ENCODE measurements at regions of chr11 and their contacts with region 1.

Region 1: GRCh38 chr11:90822996-90823395 is 600.1 kb upstream of the CHORDC1 start:
- DNase-seq: no peak
- H3K4me3 ChIP-seq: no peak overlapping the region
- H3K4me3 Mint-ChIP-seq: peak overlapping the region; percentile 9
- H3K27ac Mint-ChIP-seq: peak overlapping the region; percentile 3
- H3K4me1 ChIP-seq: peaks cover 17% of the 10 kb centered on the region
- H3K4me1 Mint-ChIP-seq: peaks cover 19% of the 10 kb centered on the region
- H3K27me3 ChIP-seq: no peaks in the 10 kb centered on the region
- H3K27me3 Mint-ChIP-seq: no peaks in the 10 kb centered on the region
- CTCF ChIP-seq: no peak

Region 2: GRCh38 chr11:90805167-90805566 is 17.8 kb before region 1 on chr11:
- CTCF ChIA-PET with region 1: no interaction called
- POLR2A ChIA-PET with region 1: no interaction called
- intact Hi-C with region 1: loop called (anchors 2 kb)
- DNase-seq: no peak
- H3K4me3 ChIP-seq: no peak overlapping the region
- H3K4me3 Mint-ChIP-seq: no peak overlapping the region
- H3K27ac Mint-ChIP-seq: peak overlapping the region; percentile 55
- H3K4me1 ChIP-seq: peaks cover 21% of the 10 kb centered on the region
- H3K4me1 Mint-ChIP-seq: peaks cover 25% of the 10 kb centered on the region
- H3K27me3 ChIP-seq: no peaks in the 10 kb centered on the region
- H3K27me3 Mint-ChIP-seq: no peaks in the 10 kb centered on the region
- CTCF ChIP-seq: no peak

Region 3: DNA sequence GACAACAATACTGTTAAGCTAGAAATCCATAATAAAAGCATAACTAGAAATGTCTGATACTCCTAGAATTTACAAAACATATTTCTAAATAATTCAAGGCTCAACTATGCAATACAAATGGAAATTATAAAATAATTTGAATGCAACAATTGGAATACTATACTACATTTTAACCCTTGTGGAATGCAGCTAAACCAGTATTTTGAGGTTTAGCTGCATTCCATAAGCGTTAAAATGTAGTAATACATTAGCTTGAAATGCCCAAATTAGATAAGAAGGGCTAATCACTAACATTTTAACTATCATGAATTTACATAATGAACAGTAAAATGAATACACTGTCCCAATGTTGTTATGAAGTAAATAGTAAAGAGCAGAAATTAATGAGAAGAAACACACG is 17.1 kb after region 1 on chr11:
- CTCF ChIA-PET with region 1: no interaction called
- POLR2A ChIA-PET with region 1: no interaction called
- intact Hi-C with region 1: loop called (anchors 1 kb)
- DNase-seq: peak in 1 of 2 experiments; percentile 17
- H3K4me3 ChIP-seq: no peak overlapping the region
- H3K4me3 Mint-ChIP-seq: no peak overlapping the region
- H3K27ac Mint-ChIP-seq: no peak overlapping the region
- H3K4me1 ChIP-seq: peaks cover 28% of the 10 kb centered on the region
- H3K4me1 Mint-ChIP-seq: peaks cover 19% of the 10 kb centered on the region
- H3K27me3 ChIP-seq: no peaks in the 10 kb centered on the region
- H3K27me3 Mint-ChIP-seq: no peaks in the 10 kb centered on the region
- CTCF ChIP-seq: no peak

Region 4: DNA sequence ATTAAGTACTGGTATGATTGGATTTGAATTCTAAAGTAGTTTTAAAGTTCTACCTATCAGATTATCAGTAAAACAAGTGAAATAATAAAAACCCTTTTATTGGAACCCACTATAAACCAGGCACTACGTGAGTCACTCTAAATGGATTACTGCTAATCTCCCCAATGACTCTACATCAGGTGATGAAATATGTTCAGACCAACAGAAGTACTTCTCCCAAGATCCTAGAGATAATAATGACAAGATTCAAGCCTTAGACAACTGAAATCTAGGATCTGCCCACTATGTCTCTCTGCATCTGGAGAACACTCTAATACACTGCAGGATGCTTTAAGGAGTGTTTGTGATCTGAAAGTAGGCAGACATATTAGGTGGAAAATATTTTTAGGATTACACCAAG is 52.0 kb after region 1 on chr11:
- CTCF ChIA-PET with region 1: no interaction called
- POLR2A ChIA-PET with region 1: no interaction called
- intact Hi-C with region 1: no loop called
- DNase-seq: no peak
- H3K4me3 ChIP-seq: no peak overlapping the region
- H3K4me3 Mint-ChIP-seq: no peak overlapping the region
- H3K27ac Mint-ChIP-seq: no peak overlapping the region
- H3K4me1 ChIP-seq: no peaks in the 10 kb centered on the region
- H3K4me1 Mint-ChIP-seq: no peaks in the 10 kb centered on the region
- H3K27me3 ChIP-seq: 0 out of 2 replicates have a peak, but pooled peaks cover 1% of the 10 kb centered on the region
- H3K27me3 Mint-ChIP-seq: peaks cover 7% of the 10 kb centered on the region
- CTCF ChIP-seq: no peak

Measured in Caco-2 (cell line).